ENCODE measurements at regions of chr15 and their contacts with region 1.

Region 1: GRCh38 chr15:74302821-74303359 is 64.6 kb downstream of the CYP11A1 start:
- DNase-seq: peak; percentile 65
- H3K4me3 Mint-ChIP-seq: no peak overlapping the region
- H3K27ac Mint-ChIP-seq: no peak overlapping the region
- H3K4me1 Mint-ChIP-seq: no peaks in the 10 kb centered on the region
- H3K27me3 Mint-ChIP-seq: peaks cover 32% of the 10 kb centered on the region

Region 2: GRCh38 chr15:74127260-74127953 is 175.5 kb before region 1 on chr15:
- CTCF ChIA-PET with region 1: interaction called, 6 read pairs
- intact Hi-C with region 1: loop called (anchors 1 kb)
- DNase-seq: peak; percentile 90
- H3K4me3 Mint-ChIP-seq: peak overlapping the region; percentile 15
- H3K27ac Mint-ChIP-seq: no peak overlapping the region
- H3K4me1 Mint-ChIP-seq: peaks cover 26% of the 10 kb centered on the region
- H3K27me3 Mint-ChIP-seq: peaks cover 57% of the 10 kb centered on the region

Region 3: DNA sequence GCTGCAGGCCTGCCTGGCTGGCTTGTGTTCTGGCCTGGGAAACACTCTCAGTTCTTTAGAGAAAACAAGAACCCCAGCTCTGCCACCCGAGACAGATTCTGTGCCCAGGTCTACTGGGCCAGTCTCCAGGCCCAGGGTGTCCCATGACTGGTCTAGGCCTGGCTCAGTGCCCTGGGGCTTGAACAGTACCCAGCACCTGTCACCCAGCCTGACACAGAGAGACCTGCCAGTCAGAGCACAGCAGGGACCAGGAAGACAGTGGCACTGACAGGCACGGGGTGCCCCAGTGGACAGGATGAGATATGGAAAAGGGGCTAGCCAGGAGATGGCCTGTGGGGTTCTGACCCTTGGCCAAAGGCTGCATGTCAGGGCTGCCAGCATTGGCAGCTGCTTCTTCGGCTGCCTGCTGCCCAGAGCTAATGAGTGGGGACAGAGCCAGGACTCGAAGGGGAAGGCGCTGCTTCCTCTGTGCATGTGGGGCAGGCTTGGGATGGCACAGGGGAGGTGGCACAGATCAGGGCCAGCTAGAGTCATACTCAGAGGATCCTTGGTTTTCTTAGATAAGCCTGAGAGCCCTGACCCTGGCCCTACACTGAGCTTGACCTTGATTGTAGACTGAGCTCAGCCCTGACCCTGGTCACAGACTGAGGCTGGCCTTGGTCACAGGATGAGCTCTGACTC is 51.6 kb before region 1 on chr15:
- CTCF ChIA-PET with region 1: no interaction called
- intact Hi-C with region 1: no loop called
- DNase-seq: no peak
- H3K4me3 Mint-ChIP-seq: no peak overlapping the region
- H3K27ac Mint-ChIP-seq: no peak overlapping the region
- H3K4me1 Mint-ChIP-seq: no peaks in the 10 kb centered on the region
- H3K27me3 Mint-ChIP-seq: peaks cover 6% of the 10 kb centered on the region

Measured in activated naive CD4-positive, alpha-beta T cell treated with anti-CD3 and anti-CD28 coated beads for 36 hours (primary cell).